H1 (cell line): ENCODE measurements at regions of chr15 and their contacts with region 1.

Region 1: DNA sequence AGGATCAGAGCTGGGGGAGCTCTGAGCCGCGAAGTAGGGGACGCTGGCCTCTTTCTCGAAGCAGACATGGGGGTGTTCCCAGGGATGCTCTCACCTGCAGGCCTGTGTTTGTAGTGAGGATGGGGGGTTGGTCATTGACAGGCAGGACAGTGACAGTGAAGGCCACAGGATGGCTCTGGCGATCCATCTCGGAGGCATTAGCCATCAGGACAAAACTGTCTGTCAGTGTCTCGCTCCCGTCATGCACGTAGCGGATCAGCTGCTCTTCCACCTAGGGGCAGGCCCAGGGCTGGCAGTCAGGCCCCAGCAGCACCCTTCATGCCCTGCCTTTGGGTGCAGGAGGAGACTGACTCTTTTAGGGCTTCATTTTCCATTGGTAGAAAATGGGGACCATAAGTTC is 28.0 kb downstream of the CSPG4 start:
- DNase-seq: no peak
- H3K4me3 ChIP-seq: no peak overlapping the region
- H3K27ac ChIP-seq: no peak overlapping the region
- H3K4me1 ChIP-seq: peaks cover 0 to 13% (median 3%) of the 10 kb centered on the region in 4 experiments; a peak in 4 of 7 replicates
- H3K27me3 ChIP-seq: no peaks in the 10 kb centered on the region
- CTCF ChIP-seq: peak; percentile 17 to 29 (median 29); a peak in 3 of 4 replicates
- EP300 ChIP-seq: no peak
- POLR2A ChIP-seq: no peak
- RAD21 ChIP-seq: peak; percentile 21 to 42; a peak in 2 of 4 replicates

Region 2: DNA sequence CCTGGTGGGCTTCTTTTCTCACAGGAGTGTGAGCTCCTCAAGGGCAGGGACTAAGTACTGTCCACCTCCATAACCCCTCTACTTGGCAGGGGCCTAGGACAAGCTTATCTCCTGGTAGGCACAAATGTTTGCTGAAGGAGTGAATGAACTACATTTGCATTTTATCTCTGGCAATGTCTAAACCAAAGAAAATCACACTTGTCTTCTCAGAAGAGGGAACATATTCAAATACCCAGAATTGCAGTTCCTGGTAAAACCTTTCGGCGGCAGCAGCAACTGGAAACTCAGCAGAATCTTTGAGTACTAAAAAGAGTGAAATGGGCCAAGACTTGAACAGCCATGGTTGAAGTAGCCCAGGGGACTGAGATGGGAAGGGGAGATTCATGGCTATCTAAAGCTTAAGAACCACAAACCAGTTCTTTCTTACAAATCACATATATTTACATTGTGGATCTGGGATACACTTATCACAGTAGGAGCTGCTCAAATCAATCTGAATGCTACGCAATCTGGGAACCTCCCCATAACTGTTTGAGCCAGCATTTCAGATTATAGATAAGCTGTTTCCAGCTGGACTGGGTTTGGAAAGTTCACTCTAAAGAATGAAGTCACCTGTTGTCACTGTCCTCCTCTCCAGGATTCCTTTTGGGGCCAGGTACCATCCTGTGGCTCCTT is 86.8 kb before region 1 on chr15:
- CTCF ChIA-PET with region 1: interaction called, 13 read pairs
- POLR2A ChIA-PET with region 1: no interaction called
- DNase-seq: no peak
- H3K4me3 ChIP-seq: no peak overlapping the region
- H3K27ac ChIP-seq: no peak overlapping the region
- H3K4me1 ChIP-seq: no peaks in the 10 kb centered on the region
- H3K27me3 ChIP-seq: no peaks in the 10 kb centered on the region
- CTCF ChIP-seq: peak in 2 of 3 experiments; percentile 39 to 52; a peak in 3 of 4 replicates
- EP300 ChIP-seq: no peak
- POLR2A ChIP-seq: no peak
- RAD21 ChIP-seq: peak; percentile 42 to 56

Region 3: DNA sequence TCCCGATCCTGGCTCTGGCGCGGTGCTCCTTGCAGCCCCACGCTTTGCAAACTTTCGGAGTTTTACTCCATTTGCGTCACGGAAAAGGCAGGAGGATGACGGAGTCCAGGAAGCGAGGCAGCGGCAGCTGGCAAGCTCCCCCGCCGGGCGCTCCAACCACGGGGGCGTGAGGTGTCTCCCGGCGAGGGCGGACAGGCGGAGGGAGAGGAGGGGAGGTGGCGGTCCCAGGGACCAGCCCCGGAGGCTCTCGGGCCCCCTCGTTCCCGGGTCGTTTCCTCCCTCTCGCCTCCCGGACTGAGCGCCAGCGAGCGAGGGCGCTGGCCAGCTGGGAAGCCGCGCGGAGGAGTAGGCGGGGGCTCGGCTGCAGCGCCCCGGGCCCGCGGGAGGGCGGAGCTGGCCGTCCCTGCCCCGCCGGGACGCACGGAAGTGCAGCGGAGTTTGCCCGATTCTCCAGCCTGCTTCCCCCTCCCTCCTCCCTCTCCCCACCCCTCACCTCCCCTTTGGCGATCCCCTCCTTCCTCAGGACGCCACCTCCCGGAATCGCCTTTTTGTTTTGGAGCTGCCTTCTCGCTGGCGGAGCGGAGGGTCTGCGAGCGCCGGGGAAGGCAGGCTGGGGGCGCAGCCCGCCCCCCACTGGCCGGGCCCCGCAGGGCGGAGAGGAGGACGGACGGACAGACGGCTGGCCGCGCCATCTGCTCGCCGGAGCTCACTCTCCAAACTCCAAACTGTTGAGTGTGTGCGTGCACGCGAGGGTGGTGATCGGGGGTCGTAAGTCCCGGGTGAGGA is 37.1 kb before region 1 on chr15 and contains the start of gene SNX33:
- CTCF ChIA-PET with region 1: interaction called, 24 read pairs
- POLR2A ChIA-PET with region 1: interaction called, 5 read pairs
- DNase-seq: peak; percentile 76 to 85
- H3K4me3 ChIP-seq: peak within 1 kb of the TSS; percentile 63 to 90 (median 72)
- H3K27ac ChIP-seq: peak within 1 kb of the TSS; percentile 82
- H3K4me1 ChIP-seq: peaks cover 9 to 29% (median 16%) of the 10 kb centered on the region in 4 experiments
- H3K27me3 ChIP-seq: peaks cover 0 to 14% (median 10%) of the 10 kb centered on the region in 4 experiments; a peak in 6 of 7 replicates
- CTCF ChIP-seq: peak; percentile 36 to 57 (median 44)
- EP300 ChIP-seq: no peak; a peak in 1 of 3 replicates
- POLR2A ChIP-seq: no peak; a peak in 1 of 3 replicates
- RAD21 ChIP-seq: peak; percentile 16 to 40; a peak in 3 of 4 replicates
- total RNA-seq, gene SNX33: 22.9 and 24.8 TPM in 2 replicates

Region 4: DNA sequence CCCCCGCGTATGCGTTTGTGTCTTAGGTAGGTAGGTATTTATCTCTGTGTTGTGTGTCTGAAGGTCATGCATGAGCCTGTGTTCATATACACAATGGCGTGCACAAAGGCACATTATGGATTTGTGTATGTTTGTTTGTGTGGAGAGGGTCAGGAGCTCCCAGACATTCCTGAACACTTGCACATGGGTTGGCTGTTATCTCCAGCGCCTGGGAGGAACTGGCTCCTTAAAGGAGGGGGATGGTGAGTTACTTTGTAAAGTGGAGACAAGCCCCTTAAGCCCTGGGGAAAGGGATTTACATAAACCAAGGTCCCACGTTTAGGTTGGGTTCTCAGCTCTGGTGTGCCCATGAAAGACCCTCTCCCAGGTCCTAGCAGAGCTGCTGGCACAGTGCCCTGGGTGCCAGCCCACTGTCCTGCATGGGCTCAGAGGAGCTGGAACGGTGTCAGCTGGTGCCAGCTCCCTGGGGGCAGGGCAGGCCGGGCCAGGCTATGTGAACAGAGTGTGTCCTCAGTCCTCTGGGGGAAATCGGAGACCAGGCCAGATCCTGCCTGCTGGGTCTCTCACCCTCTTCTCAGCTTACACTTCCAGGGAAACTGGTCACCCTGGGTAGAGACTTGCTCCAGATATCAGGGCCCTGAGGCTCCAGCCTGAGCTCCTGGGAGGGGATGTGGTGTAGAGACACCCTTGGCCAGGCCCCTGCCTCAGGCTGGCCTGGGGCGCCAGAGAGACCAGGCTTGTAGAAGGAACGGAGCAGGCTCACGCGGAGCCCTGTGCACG is 11.8 kb before region 1 on chr15:
- CTCF ChIA-PET with region 1: interaction called, 60 read pairs
- POLR2A ChIA-PET with region 1: interaction called, 4 read pairs
- DNase-seq: no peak
- H3K4me3 ChIP-seq: no peak overlapping the region
- H3K27ac ChIP-seq: no peak overlapping the region
- H3K4me1 ChIP-seq: peaks cover 7 to 14% (median 9%) of the 10 kb centered on the region in 4 experiments
- H3K27me3 ChIP-seq: no peaks in the 10 kb centered on the region
- CTCF ChIP-seq: no peak
- EP300 ChIP-seq: no peak
- POLR2A ChIP-seq: no peak
- RAD21 ChIP-seq: no peak

Region 5: DNA sequence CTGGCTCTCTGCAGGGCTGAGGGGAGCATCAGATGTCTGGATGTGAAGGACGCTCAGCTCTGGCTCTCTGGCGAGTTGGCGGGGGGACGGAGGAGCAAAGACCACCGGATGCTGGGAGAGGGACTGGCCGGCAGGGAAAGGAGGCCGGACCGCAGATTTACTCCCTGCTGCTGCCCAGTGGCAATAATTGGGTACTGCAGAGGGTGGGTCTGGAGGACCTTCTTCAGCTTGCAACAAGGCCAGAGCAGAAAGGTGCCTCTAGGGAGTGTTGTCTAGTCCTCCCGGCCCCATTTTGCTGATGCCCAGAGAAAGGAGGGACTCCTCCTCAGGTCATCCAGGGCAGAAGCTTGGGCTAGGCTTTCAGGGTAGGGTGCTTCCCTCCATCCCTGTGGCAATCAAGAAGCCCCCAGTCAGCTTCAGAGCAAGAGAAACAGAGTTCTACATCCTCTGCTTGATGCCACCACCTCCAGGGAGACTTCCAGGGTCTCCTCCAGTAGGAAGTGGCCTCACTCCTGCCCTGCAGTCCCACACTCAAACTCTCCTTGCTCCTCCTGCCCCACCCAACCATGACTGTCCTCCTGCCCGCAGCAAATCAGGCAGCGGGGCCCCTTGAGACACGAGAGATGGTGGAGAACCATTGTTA is 48.3 kb after region 1 on chr15:
- CTCF ChIA-PET with region 1: interaction called, 13 read pairs
- POLR2A ChIA-PET with region 1: no interaction called
- DNase-seq: peak; percentile 51 to 96
- H3K4me3 ChIP-seq: no peak overlapping the region
- H3K27ac ChIP-seq: no peak overlapping the region
- H3K4me1 ChIP-seq: peaks cover 2 to 7% (median 4%) of the 10 kb centered on the region in 4 experiments; a peak in 6 of 7 replicates
- H3K27me3 ChIP-seq: no peaks in the 10 kb centered on the region
- CTCF ChIP-seq: peak; percentile 81 to 91 (median 89)
- EP300 ChIP-seq: no peak
- POLR2A ChIP-seq: no peak
- RAD21 ChIP-seq: peak; percentile 54 to 69